RWPE1 (cell line): ENCODE measurements at regions of chr9 and their contacts with region 1.

Region 1: DNA sequence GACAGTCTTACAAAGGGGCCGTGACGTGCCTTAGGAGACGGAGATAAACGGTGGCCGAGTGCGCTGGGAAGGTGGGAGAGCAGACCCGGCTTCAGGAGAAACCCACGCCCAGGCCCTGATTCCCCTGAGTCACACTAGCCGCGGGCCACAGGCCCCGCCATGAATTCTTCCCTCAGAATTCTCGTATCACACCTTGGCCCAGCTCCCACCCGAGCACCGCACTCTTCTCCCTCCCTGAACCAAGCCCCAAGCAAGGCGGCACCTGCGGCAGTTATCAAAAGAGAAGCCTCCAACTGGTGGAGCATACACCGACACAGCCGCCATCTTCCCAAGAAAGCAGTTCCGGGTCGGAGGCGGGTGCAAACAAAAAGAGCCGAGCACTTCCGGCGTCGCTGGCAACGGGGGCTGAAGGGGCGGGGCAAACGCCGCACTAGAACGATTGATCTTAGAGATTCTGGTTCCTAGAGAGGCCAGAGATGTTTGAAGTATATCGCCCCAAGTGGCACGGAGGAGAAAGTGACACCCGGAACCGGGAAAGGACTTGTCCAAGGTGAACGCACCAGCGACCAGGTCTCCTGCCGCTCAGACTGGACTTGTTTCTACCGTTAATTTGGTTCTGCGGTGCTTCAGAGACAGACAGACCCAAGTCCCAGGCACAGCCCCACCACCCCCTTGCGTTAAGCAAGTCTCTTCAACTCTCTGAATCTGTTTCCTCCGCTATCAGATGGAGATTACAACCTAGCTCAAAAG is at the start of gene PSMB7:
- DNase-seq: peak; percentile 99
- H3K27ac ChIP-seq: peak within 1 kb of the TSS; percentile 79
- CTCF ChIP-seq: peak; percentile 96

Region 2: DNA sequence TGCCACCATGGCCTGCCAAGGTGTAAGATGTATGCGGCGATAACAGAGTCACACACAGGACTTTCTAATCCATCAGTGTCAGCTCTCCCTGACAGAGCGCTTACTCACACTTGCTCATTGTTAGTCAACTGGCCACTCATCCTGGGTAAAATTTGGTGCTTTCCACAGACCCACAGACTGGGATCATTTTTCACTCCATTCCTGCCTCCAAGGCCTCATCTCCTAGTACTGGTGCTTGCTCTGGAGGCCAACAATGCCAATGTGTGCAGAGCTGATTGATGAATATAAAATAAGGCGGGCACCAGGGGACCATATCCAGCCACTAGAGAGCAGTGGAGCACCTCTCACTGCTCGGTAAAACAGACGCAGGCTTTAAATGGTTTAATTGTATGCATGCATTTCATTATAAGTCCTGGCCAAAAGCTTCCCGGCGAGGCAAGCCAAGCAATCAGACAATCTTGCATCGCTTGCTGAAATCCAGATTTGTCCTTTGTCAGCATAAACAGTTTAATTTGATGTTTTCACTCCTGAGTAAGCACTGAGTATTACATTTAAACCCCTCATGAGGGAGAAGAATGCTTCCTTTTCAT is 22.3 kb before region 1 on chr9:
- CTCF ChIA-PET with region 1: interaction called, 13 read pairs
- POLR2A ChIA-PET with region 1: no interaction called
- DNase-seq: peak; percentile 98
- H3K27ac ChIP-seq: peak overlapping the region; percentile 54
- CTCF ChIP-seq: peak; percentile 72